ENCODE measurements at regions of chr9 and their contacts with region 1.

Region 1: DNA sequence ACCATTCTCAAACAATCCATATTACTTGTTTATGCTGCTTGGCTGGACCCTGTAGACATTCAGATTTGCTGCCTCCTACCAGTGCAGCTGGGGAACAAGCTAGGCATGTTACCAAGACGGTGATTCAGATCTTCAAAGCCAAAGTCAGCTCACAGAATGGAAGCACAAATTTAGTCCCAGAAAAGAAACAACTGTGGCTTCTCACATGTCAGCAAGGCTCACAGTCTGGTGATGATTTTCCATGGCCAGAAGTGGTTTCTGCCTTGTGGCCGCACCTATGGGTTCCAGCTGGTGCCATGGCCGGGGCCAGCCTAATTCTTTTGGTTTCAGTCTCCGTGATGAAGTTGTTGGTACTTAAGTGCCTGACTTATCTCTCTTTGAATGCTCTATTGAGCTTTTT is 182.2 kb downstream of the TMC1 start:
- DNase-seq: no peak
- ATAC-seq: no peak
- H3K4me3 ChIP-seq: no peak overlapping the region
- H3K27ac ChIP-seq: no peak overlapping the region
- H3K4me1 ChIP-seq: no peaks in the 10 kb centered on the region
- H3K27me3 ChIP-seq: no peaks in the 10 kb centered on the region
- CTCF ChIP-seq: no peak
- EP300 ChIP-seq: no peak
- POLR2A ChIP-seq: no peak
- RAD21 ChIP-seq: no peak

Region 2: DNA sequence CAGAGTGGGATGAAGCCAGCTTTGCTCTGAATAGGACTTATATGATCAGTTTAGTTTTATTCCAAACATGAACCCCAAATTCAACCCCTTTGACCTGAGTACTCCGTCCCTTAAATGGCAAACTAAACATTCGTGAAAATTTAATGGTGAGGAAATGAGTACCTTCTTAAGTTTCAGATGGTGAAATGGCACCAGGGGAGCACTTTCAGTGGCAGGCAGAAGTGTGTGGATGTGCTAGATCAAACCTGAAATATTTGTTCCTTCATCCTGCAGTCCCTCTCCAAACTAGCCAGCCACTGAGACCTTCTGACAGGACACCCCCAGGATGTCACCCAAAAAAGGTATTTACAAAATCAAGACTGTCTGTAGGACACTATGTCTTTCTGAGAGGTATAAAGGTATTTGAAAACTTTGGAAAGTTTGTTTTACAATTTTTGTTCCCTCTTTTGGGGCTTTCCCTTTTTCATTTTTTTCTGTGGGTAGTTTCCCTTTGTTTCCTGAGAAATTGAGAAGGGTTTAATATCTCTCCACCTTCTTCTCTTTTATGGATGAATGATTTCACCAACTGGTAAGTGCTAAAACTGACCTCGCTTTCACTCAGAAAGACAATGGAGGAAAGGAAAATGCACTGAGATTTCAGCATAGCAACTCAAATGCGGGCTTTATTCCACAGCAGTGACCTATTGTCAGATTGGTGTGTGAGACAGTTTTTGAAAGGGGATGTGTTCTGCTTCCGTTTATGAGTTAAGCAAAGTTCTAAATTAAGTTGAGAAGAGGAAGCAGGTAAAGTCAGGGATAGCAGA is 55.0 kb before region 1 on chr9:
- CTCF ChIA-PET with region 1: no interaction called
- POLR2A ChIA-PET with region 1: no interaction called
- in situ Hi-C with region 1: no loop called
- intact Hi-C with region 1: loop called (anchors 10 kb)
- DNase-seq: no peak
- ATAC-seq: no peak
- H3K4me3 ChIP-seq: no peak overlapping the region
- H3K27ac ChIP-seq: no peak overlapping the region
- H3K4me1 ChIP-seq: no peaks in the 10 kb centered on the region
- H3K27me3 ChIP-seq: no peaks in the 10 kb centered on the region
- CTCF ChIP-seq: no peak
- EP300 ChIP-seq: no peak
- POLR2A ChIP-seq: no peak
- RAD21 ChIP-seq: no peak

Region 3: GRCh38 chr9:72902268-72902667 is 198.7 kb after region 1 on chr9:
- CTCF ChIA-PET with region 1: no interaction called
- POLR2A ChIA-PET with region 1: no interaction called
- in situ Hi-C with region 1: no loop called
- intact Hi-C with region 1: no loop called
- DNase-seq: no peak
- ATAC-seq: no peak
- H3K4me3 ChIP-seq: no peak overlapping the region
- H3K27ac ChIP-seq: no peak overlapping the region
- H3K4me1 ChIP-seq: no peaks in the 10 kb centered on the region
- H3K27me3 ChIP-seq: no peaks in the 10 kb centered on the region
- CTCF ChIP-seq: no peak
- EP300 ChIP-seq: no peak
- POLR2A ChIP-seq: no peak
- RAD21 ChIP-seq: no peak

Measured in K562 (cell line).